AG04449 (cell line): ENCODE measurements at regions of chr2 and their contacts with region 1.

Region 1: DNA sequence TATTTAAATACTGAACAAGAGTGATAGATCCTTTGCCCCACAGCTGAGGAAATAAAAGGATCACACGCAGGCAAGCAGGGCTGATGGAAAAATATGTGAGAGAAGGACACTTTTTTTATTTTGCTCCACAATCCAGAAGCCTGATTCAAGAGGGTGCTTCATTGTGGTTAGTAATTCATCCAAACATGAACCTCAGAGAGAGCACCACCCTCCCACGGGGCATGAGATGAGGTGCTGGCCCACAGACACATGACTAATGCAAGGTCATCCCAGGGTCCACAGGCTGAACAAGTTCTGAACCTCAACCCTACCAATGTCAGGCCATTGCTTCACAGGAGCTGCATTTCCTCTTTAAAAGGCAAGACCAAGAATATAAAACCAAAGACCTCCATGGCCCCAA is 239.6 kb downstream of the MREG start:
- DNase-seq: peak; percentile 88
- H3K4me3 ChIP-seq: no peak overlapping the region
- CTCF ChIP-seq: no peak

Region 2: DNA sequence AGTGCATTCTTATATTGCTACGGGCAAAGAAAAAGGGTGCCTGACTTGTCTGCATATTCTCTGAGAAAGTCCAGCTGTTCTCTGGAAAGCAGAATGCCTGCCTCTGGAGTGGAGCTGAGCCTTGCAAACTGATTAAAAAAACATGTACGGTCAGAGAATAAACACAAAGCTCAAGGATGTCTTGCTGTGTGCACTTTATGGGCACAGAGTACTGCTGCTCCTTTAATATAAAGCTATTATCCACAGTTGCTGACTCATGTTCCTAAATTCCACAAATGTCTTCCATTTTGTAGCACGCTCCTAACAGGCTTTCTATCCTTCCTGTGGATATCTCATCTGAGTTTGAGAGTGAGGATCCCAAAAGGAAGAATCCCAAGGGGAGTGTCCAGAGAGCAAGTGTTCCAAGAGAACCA is 10.6 kb after region 1 on chr2:
- CTCF ChIA-PET with region 1: interaction called, 27 read pairs
- POLR2A ChIA-PET with region 1: interaction called, 5 read pairs
- DNase-seq: peak; percentile 72
- H3K4me3 ChIP-seq: no peak overlapping the region
- CTCF ChIP-seq: no peak